GM12878 (cell line): ENCODE measurements at regions of chr1 and their contacts with region 1.

Region 1: DNA sequence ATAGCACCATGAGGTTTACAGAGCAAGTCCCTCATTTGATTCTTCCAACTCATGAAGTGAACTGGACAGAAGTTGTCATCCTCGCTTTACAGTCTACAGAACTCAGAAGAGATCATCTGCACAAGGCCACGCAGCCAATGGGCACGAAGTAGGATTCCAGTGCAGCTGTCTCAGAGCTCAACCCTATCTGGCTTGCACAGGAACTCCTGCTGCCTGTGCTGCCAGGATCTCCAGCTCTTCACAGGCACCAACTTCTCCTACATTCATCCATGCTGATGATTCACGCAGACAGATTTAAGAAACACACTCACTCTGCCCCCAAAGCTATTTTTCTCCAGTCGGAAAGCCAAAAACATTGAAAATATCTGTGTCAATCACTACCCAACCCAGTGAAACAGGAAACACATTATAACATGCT is 157.0 kb downstream of the RERE start:
- DNase-seq: no peak
- ATAC-seq: peak; percentile 41
- H3K4me3 ChIP-seq: peak overlapping the region; percentile 56; the same call in 1 of the 2 replicates
- H3K27ac ChIP-seq: peak overlapping the region; percentile 79
- H3K4me1 ChIP-seq: peaks cover 47% of the 10 kb centered on the region
- H3K27me3 ChIP-seq: no peaks in the 10 kb centered on the region
- CTCF ChIP-seq: no peak
- EP300 ChIP-seq: no peak
- POLR2A ChIP-seq: peak; percentile 53
- RAD21 ChIP-seq: no peak

Region 2: DNA sequence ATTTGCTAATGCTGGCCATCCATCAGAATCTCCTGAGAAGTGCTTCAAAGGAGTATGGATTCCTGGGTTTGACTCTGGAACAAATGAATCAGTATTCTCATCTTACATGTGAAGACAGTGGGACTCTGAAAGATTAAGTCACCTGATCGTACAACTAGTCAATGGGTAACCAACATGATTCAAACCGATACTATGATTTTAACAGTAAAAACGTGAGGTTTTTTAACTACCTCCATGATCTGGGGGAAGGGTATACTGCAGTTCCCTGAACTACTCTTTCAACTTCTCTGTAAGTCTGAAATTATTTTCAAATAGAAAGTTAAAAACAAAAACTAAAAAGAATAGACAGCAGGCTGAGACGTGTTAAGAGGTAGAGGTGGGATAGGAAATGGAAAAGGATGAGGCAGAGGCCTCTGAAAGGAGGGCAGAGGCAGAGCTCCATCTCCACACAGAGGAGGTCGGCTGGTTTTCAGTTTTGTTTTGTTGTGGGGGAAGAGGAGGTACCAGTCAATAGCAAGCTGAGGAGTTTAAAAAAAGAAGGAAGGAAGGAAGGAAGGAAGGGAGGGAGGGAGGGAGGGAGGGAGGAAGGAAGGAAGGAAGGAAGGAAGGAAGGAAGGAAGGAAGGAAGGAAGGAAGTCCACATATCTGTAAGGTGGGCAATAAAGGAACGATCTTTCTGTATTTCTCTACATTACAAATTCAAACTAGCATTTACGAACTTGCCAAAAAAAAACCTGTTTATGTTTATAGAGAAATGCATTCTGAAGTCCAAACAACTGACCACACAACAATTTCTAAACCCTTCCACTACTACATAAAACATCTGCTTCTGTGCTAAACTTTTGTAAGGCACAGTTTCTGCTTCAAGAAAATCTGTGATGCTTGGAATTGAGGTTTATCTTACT is 56.1 kb before region 1 on chr1:
- CTCF ChIA-PET with region 1: interaction called, 3 read pairs
- POLR2A ChIA-PET with region 1: interaction called, 3 read pairs
- RAD21 ChIA-PET with region 1: no interaction called
- SMC1A ChIA-PET with region 1: interaction called, 3 read pairs
- in situ Hi-C with region 1: loop called (anchors 5 kb)
- intact Hi-C with region 1: no loop called
- DNase-seq: peak; percentile 82
- ATAC-seq: peak; percentile 95
- H3K4me3 ChIP-seq: peak overlapping the region; percentile 46; the same call in 1 of the 2 replicates
- H3K27ac ChIP-seq: peak overlapping the region; percentile 29; the same call in 1 of the 2 replicates
- H3K4me1 ChIP-seq: peaks cover 19% of the 10 kb centered on the region
- H3K27me3 ChIP-seq: no peaks in the 10 kb centered on the region
- CTCF ChIP-seq: no peak
- EP300 ChIP-seq: peak in 1 of 2 experiments; percentile 58; a peak in 1 of 4 replicates
- POLR2A ChIP-seq: no peak
- RAD21 ChIP-seq: 0 out of 2 replicates have a peak, but pooled peaks have one; percentile 12

Region 3: GRCh38 chr1:8629241-8630091 is 31.0 kb before region 1 on chr1:
- CTCF ChIA-PET with region 1: interaction called, 6 read pairs
- POLR2A ChIA-PET with region 1: interaction called, 5 read pairs
- RAD21 ChIA-PET with region 1: interaction called, 15 read pairs
- SMC1A ChIA-PET with region 1: interaction called, 98 read pairs
- in situ Hi-C with region 1: no loop called
- intact Hi-C with region 1: no loop called
- DNase-seq: peak; percentile 91
- ATAC-seq: peak; percentile 95
- H3K4me3 ChIP-seq: peak overlapping the region; percentile 43; the same call in 1 of the 2 replicates
- H3K27ac ChIP-seq: peak overlapping the region; percentile 86
- H3K4me1 ChIP-seq: peaks cover 42% of the 10 kb centered on the region
- H3K27me3 ChIP-seq: no peaks in the 10 kb centered on the region
- CTCF ChIP-seq: no peak
- EP300 ChIP-seq: peak; percentile 24 to 52; a peak in 2 of 4 replicates
- POLR2A ChIP-seq: 0 out of 2 replicates have a peak, but pooled peaks have one; percentile 15
- RAD21 ChIP-seq: no peak

Region 4: GRCh38 chr1:8643542-8644536 is 16.6 kb before region 1 on chr1:
- CTCF ChIA-PET with region 1: interaction called, 20 read pairs
- POLR2A ChIA-PET with region 1: interaction called, 30 read pairs
- RAD21 ChIA-PET with region 1: interaction called, 384 read pairs
- SMC1A ChIA-PET with region 1: interaction called, 587 read pairs
- in situ Hi-C with region 1: no loop called
- intact Hi-C with region 1: loop called (anchors 2 kb)
- DNase-seq: peak; percentile 94
- ATAC-seq: peak; percentile 95
- H3K4me3 ChIP-seq: no peak overlapping the region
- H3K27ac ChIP-seq: peak overlapping the region; percentile 75
- H3K4me1 ChIP-seq: peaks cover 43% of the 10 kb centered on the region
- H3K27me3 ChIP-seq: no peaks in the 10 kb centered on the region
- CTCF ChIP-seq: no peak
- EP300 ChIP-seq: peak; percentile 52 to 61; a peak in 1 of 4 replicates
- POLR2A ChIP-seq: no peak
- RAD21 ChIP-seq: 0 out of 2 replicates have a peak, but pooled peaks have one; percentile 27

Region 5: DNA sequence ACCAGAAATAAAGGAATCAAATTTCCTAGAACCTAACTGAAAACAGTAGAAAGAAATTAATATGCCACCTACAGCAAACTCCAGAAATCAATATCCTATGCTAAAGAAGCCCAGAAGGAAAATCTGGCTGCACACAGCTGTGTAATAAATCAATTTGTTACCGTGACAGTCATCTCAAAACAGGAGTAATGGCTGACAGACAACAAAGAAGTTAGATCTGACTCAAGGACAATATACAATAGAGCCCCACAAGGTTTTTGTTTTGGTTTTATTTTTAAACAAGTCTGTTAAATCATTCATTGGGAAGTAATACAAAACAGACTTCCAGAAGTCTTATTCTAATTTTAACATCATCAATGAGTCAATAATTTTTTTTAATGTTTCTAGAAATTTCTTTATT is 11.4 kb before region 1 on chr1:
- CTCF ChIA-PET with region 1: interaction called, 20 read pairs
- POLR2A ChIA-PET with region 1: interaction called, 40 read pairs
- RAD21 ChIA-PET with region 1: interaction called, 384 read pairs
- SMC1A ChIA-PET with region 1: interaction called, 587 read pairs
- in situ Hi-C with region 1: no loop called
- intact Hi-C with region 1: loop called (anchors 2 kb)
- DNase-seq: no peak
- ATAC-seq: peak; percentile 76
- H3K4me3 ChIP-seq: no peak overlapping the region
- H3K27ac ChIP-seq: 0 out of 2 replicates have a peak overlapping the region, but pooled peaks have one; percentile 39
- H3K4me1 ChIP-seq: peaks cover 67% of the 10 kb centered on the region
- H3K27me3 ChIP-seq: no peaks in the 10 kb centered on the region
- CTCF ChIP-seq: no peak
- EP300 ChIP-seq: peak in 1 of 2 experiments; percentile 84; a peak in 3 of 4 replicates
- POLR2A ChIP-seq: no peak
- RAD21 ChIP-seq: no peak

Region 6: DNA sequence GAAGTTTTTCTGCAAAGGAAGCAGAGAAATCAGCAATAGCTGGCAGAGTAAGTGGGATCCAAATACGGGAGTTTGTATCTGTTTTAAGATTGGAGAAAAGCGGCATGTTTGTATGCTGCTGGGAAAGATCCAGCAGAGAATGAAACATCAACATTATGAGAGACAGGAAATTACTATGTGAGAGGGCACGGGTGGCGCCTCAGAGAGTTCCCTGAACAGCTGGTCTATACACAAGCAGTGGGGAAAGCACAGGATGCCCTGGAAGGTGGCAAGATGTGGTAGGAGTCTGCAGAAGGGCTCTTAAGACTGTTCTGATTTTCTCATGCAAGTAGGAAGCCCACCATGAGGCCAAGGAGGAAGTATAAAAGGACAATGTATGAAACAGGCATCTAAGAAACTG is 26.6 kb after region 1 on chr1:
- CTCF ChIA-PET with region 1: no interaction called
- POLR2A ChIA-PET with region 1: interaction called, 3 read pairs
- RAD21 ChIA-PET with region 1: interaction called, 3 read pairs
- SMC1A ChIA-PET with region 1: interaction called, 30 read pairs
- in situ Hi-C with region 1: no loop called
- intact Hi-C with region 1: no loop called
- DNase-seq: no peak
- ATAC-seq: peak; percentile 72
- H3K4me3 ChIP-seq: no peak overlapping the region
- H3K27ac ChIP-seq: peak overlapping the region; percentile 5; the same call in 1 of the 2 replicates
- H3K4me1 ChIP-seq: peaks cover 23% of the 10 kb centered on the region
- H3K27me3 ChIP-seq: no peaks in the 10 kb centered on the region
- CTCF ChIP-seq: no peak
- EP300 ChIP-seq: no peak
- POLR2A ChIP-seq: no peak
- RAD21 ChIP-seq: no peak

Region 7: GRCh38 chr1:8702850-8703810 is 42.7 kb after region 1 on chr1:
- CTCF ChIA-PET with region 1: interaction called, 9 read pairs
- POLR2A ChIA-PET with region 1: interaction called, 6 read pairs
- RAD21 ChIA-PET with region 1: interaction called, 16 read pairs
- SMC1A ChIA-PET with region 1: interaction called, 142 read pairs
- in situ Hi-C with region 1: no loop called
- intact Hi-C with region 1: no loop called
- DNase-seq: no peak
- ATAC-seq: peak; percentile 75
- H3K4me3 ChIP-seq: peak overlapping the region; percentile 57
- H3K27ac ChIP-seq: peak overlapping the region; percentile 54
- H3K4me1 ChIP-seq: no peaks in the 10 kb centered on the region; the same call in 1 of the 2 replicates
- H3K27me3 ChIP-seq: no peaks in the 10 kb centered on the region
- CTCF ChIP-seq: peak; percentile 6 to 55 (median 17); a peak in 3 of 6 replicates
- EP300 ChIP-seq: no peak
- POLR2A ChIP-seq: peak; percentile 87
- RAD21 ChIP-seq: peak; percentile 29; the same call in 1 of the 2 replicates